Activated CD8-positive, alpha-beta T cell treated with anti-CD3 and anti-CD28 coated beads, Interleukin-2, amount 10 ng/mL, durations not matched to agents 7 days and 5 days (primary cell): ENCODE measurements at regions of chr10 and their contacts with region 1.

Region 1: GRCh38 chr10:14604181-14605142 is 170.2 kb downstream of the FAM107B start:
- DNase-seq: peak; percentile 75
- ATAC-seq: peak; percentile 73
- H3K4me3 Mint-ChIP-seq: peak overlapping the region; percentile 82
- H3K27ac Mint-ChIP-seq: peak overlapping the region; percentile 80
- H3K4me1 Mint-ChIP-seq: peaks cover 50% of the 10 kb centered on the region
- H3K27me3 Mint-ChIP-seq: no peaks in the 10 kb centered on the region

Region 2: DNA sequence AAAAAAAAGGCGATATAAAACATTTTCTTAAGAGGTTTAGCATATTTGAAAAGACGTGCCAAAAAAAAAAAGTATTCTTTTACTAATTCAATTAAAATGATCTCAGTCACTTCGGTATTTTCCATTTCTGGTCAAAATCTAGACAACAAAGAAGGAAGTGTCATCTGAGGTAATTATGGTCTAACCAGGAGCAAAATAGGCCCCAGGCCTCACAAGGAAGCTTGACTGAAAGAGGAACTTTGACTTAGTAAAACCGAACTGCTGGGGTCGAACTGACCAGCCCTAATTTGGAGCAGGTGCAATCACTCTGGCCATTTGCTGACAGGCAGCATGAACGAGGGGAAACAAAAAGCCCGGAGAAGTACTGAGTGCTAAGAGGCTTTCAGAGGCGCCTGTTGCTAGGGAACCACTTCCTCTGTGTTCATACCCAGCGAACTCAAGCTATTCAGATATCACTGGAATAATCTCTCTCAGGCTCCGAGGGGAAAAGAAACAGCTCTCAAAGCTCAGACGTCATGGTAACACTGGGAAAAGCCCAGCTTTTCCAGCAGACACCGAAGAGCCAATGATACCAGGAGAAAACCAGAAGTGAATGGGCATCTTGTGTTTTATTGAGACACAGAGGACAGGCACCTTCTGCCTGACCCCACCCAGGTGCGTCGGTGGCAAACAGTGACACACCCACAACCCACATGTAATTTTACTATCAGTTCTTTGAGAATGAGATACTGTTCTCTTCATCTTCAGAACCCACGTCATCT is 43.7 kb after region 1 on chr10:
- CTCF ChIA-PET with region 1: no interaction called
- POLR2A ChIA-PET with region 1: interaction called, 20 read pairs
- DNase-seq: peak; percentile 82
- ATAC-seq: peak; percentile 90
- H3K4me3 Mint-ChIP-seq: peak overlapping the region; percentile 78
- H3K27ac Mint-ChIP-seq: peak overlapping the region; percentile 93
- H3K4me1 Mint-ChIP-seq: peaks cover 49% of the 10 kb centered on the region
- H3K27me3 Mint-ChIP-seq: no peaks in the 10 kb centered on the region

Region 3: GRCh38 chr10:14812271-14812670 is 207.8 kb after region 1 on chr10:
- CTCF ChIA-PET with region 1: no interaction called
- POLR2A ChIA-PET with region 1: no interaction called
- DNase-seq: no peak
- ATAC-seq: no peak
- H3K4me3 Mint-ChIP-seq: no peak overlapping the region
- H3K27ac Mint-ChIP-seq: no peak overlapping the region
- H3K4me1 Mint-ChIP-seq: peaks cover 14% of the 10 kb centered on the region
- H3K27me3 Mint-ChIP-seq: peaks cover 2% of the 10 kb centered on the region